ENCODE measurements at regions of chr3 and their contacts with region 1.

Region 1: GRCh38 chr3:108412121-108412752 is 98.2 kb downstream of the MYH15 start:
- DNase-seq: no peak
- H3K4me3 ChIP-seq: no peak overlapping the region
- H3K27ac ChIP-seq: no peak overlapping the region
- H3K4me1 ChIP-seq: peaks cover 0 to under 1% (median 0%) of the 10 kb centered on the region in 4 experiments; a peak in 1 of 7 replicates
- H3K27me3 ChIP-seq: no peaks in the 10 kb centered on the region
- CTCF ChIP-seq: no peak
- EP300 ChIP-seq: no peak
- POLR2A ChIP-seq: no peak
- RAD21 ChIP-seq: no peak

Region 2: DNA sequence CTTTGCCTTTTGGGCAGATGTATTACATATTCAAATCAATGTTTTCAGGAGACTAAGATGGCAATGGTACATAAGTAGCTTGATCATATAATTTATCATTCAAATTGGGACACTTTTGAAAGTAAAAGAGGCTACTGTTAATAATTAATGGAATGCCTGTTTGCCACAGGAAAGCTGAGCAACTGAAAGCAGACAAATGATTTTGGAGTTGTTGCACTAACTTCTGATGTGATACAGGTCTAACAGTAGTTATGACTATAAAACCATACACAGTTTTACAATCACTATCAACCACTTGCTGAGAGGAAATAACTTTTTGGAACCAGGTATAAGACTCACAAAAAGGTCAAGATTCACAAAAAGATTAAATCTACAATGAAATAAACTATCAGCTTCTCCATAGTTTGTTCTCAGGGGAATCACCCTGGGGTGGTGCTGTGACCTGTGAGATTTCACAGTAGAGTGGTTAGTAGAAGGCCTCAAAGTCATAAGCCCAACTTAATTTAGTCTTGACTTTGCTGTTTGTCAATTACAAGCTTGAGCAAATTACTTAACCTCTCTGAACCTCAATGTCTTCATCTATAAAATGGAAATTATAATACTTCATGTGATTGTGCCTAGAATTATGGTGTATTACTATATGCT is 73.2 kb before region 1 on chr3:
- CTCF ChIA-PET with region 1: no interaction called
- POLR2A ChIA-PET with region 1: no interaction called
- DNase-seq: no peak
- H3K4me3 ChIP-seq: no peak overlapping the region
- H3K27ac ChIP-seq: no peak overlapping the region
- H3K4me1 ChIP-seq: no peaks in the 10 kb centered on the region
- H3K27me3 ChIP-seq: no peaks in the 10 kb centered on the region
- CTCF ChIP-seq: no peak
- EP300 ChIP-seq: no peak
- POLR2A ChIP-seq: no peak
- RAD21 ChIP-seq: no peak

Region 3: GRCh38 chr3:108428586-108428985 is 16.3 kb after region 1 on chr3:
- CTCF ChIA-PET with region 1: interaction called, 11 read pairs
- POLR2A ChIA-PET with region 1: no interaction called
- DNase-seq: no peak
- H3K4me3 ChIP-seq: no peak overlapping the region
- H3K27ac ChIP-seq: no peak overlapping the region
- H3K4me1 ChIP-seq: no peaks in the 10 kb centered on the region
- H3K27me3 ChIP-seq: no peaks in the 10 kb centered on the region
- CTCF ChIP-seq: no peak
- EP300 ChIP-seq: no peak
- POLR2A ChIP-seq: no peak
- RAD21 ChIP-seq: no peak

Measured in H1 (cell line).